GM23248 (cell line): ENCODE measurements at regions of chr11 and their contacts with region 1.

Region 1: GRCh38 chr11:124402326-124402922 is 3.6 kb upstream of the OR8B3 start:
- DNase-seq: peak; percentile 93
- H3K4me3 ChIP-seq: no peak overlapping the region
- H3K27ac ChIP-seq: no peak overlapping the region
- H3K4me1 ChIP-seq: no peaks in the 10 kb centered on the region
- H3K27me3 ChIP-seq: 0 out of 2 replicates have a peak, but pooled peaks cover 14% of the 10 kb centered on the region

Region 2: GRCh38 chr11:124865921-124866583 is 463.6 kb after region 1 on chr11:
- in situ Hi-C with region 1: loop called (anchors 25 kb)
- DNase-seq: peak; percentile 75
- H3K4me3 ChIP-seq: peak overlapping the region; percentile 53
- H3K27ac ChIP-seq: no peak overlapping the region
- H3K4me1 ChIP-seq: 0 out of 2 replicates have a peak, but pooled peaks cover 10% of the 10 kb centered on the region
- H3K27me3 ChIP-seq: peaks cover 87% of the 10 kb centered on the region